Activated CD4-positive, alpha-beta memory T cell treated with anti-CD3 and anti-CD28 coated beads for 36 hours (primary cell): ENCODE measurements at regions of chr12 and their contacts with region 1.

Region 1: DNA sequence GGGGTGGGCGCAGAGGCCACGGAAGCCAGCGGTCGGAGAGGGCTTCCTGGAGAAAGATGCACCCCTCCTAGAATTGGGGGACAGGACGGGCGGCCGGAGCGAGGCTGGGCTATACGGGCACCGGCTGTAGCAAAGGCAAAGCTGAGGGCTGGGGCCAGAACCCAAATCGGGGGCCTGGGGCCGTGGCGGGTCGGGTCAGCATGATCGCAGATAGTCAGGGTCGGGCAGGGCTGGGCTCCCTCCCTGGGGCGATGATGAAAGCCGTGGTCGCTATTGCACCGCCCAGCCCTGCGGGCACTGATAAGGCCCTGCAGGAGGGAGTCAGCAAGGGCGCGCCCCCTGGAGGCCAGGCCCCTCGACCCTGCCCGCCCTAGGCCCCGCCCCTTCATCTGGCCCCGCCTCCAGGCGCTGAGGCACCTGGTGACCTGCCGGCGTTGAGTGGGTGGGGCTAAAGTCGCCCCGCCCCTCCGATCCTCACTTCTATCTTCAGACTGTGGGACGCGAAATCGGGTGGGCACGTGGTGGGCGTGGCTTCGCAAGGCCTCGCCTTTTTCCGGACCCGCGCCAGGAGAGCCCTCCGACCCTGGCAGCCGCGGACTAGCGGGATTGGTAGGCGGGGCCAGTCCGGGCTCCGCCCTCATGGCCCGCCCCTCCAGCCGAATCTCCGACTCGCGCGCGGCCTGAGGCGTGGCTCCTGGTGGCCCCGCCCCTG is 418 bp upstream of the SH2B3 start:
- DNase-seq: peak; percentile 99
- H3K4me3 Mint-ChIP-seq: peak overlapping the region; percentile 73
- H3K27ac Mint-ChIP-seq: peak overlapping the region; percentile 94
- H3K4me1 Mint-ChIP-seq: peaks cover 52% of the 10 kb centered on the region
- H3K27me3 Mint-ChIP-seq: peaks cover 4% of the 10 kb centered on the region

Region 2: GRCh38 chr12:111444925-111445725 is 39.8 kb after region 1 on chr12:
- CTCF ChIA-PET with region 1: interaction called, 1,161 read pairs
- POLR2A ChIA-PET with region 1: interaction called, 91 read pairs
- intact Hi-C with region 1: loop called (anchors 1 kb)
- DNase-seq: peak; percentile 95
- H3K4me3 Mint-ChIP-seq: peak overlapping the region; percentile 36
- H3K27ac Mint-ChIP-seq: peak overlapping the region; percentile 77
- H3K4me1 Mint-ChIP-seq: peaks cover 82% of the 10 kb centered on the region
- H3K27me3 Mint-ChIP-seq: no peaks in the 10 kb centered on the region

Region 3: DNA sequence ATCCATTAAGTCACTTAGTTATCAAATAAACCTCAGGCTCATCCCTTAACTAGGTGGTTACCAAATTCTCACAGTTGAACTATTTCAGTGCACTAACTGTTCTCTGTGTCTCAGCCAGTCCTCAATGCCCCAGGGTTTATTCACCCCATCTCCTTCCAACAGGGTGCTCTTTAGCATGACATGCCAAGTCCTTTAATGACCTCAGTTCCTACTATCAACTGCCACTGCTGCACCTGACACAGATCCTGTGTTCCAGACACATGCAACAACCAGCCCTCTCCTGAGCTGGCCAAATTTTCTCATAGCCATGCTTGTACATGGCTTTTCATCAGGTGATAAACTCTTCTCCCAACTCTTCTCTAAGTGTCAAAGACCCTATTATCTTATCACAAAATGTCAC is 113.8 kb after region 1 on chr12:
- CTCF ChIA-PET with region 1: interaction called, 3 read pairs
- POLR2A ChIA-PET with region 1: no interaction called
- intact Hi-C with region 1: loop called (anchors 1 kb)
- DNase-seq: no peak
- H3K4me3 Mint-ChIP-seq: no peak overlapping the region
- H3K27ac Mint-ChIP-seq: no peak overlapping the region
- H3K4me1 Mint-ChIP-seq: no peaks in the 10 kb centered on the region
- H3K27me3 Mint-ChIP-seq: no peaks in the 10 kb centered on the region

Region 4: DNA sequence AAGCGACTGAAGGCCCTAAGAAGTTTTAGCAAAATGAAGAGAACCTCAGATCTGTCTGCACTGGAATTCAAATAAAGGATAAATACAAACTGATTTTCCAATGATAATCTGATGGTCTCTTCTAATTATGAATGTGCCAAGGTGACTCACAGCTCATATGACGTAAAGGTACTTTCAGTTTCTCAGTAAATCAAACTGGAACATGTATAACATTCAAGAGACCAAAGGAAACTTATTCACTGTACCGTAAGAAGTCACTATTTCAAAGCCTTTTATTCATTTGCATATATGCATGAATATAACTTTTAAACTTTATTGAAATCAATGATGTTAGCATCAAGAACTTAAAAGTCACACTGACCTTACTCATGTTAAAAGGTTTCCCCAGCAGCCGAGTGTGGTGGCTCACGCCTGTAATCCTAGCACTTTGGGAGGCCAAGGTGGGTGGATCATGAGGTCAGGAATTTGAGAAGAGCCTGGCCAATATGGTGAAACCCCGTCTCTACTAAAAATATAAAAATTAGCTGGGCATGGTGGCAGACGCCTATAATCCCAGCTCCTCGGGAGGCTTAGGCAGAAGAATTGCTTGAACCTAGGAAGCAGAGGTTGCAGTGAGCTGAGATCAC is 141.6 kb after region 1 on chr12:
- CTCF ChIA-PET with region 1: no interaction called
- POLR2A ChIA-PET with region 1: no interaction called
- intact Hi-C with region 1: loop called (anchors 5 kb)
- DNase-seq: peak; percentile 54
- H3K4me3 Mint-ChIP-seq: no peak overlapping the region
- H3K27ac Mint-ChIP-seq: peak overlapping the region; percentile 51
- H3K4me1 Mint-ChIP-seq: peaks cover 21% of the 10 kb centered on the region
- H3K27me3 Mint-ChIP-seq: no peaks in the 10 kb centered on the region